ENCODE measurements at regions of chr18 and their contacts with region 1.

Region 1: DNA sequence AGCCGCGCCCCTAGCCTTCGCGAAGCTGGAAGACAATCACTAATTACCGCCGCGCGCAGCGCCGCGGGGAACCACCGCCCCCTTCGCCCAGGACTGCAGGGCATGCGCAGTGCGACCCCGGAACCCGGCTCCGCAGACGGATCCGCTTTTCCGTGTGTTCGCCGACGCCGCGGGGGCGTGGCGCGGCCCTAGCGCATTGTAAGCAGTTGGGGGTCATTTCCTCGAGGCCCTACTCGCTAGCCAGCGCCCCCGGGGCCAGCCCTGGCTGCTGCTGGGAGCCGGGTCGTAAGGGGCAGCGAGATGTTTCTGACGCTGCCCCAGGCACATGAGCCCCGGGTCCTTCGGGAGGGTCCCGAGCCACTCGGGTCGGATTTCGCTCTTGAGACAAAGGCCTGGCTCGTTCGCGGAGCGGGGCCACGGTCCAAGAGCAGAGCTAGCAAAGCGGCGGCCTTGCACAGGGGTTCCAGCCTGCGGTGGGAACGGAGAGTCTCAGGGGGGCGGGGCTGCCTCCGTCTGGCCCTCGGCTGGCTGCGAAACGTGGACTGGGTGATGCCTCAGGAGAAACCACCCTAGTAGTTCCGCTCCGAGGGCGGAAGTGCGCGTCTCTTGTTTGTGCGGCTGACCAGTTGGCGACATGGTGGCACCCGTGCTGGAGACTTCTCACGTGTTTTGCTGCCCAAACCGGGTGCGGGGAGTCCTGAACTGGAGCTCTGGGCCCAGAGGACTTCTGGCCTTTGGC is at the starts of genes ELP2 and SLC39A6:
- DNase-seq: peak; percentile 97
- ATAC-seq: peak; percentile 87
- H3K4me3 Mint-ChIP-seq: peak within 1 kb of the TSS; percentile 94
- H3K27ac Mint-ChIP-seq: peak within 1 kb of the TSS; percentile 92
- H3K4me1 Mint-ChIP-seq: peaks cover 57% of the 10 kb centered on the region
- H3K27me3 Mint-ChIP-seq: no peaks in the 10 kb centered on the region
- CTCF ChIP-seq: no peak
- total RNA-seq, gene ELP2: 105 and 124 TPM in 2 replicates
- total RNA-seq, gene SLC39A6: 17.6 and 18.6 TPM in 2 replicates

Region 2: DNA sequence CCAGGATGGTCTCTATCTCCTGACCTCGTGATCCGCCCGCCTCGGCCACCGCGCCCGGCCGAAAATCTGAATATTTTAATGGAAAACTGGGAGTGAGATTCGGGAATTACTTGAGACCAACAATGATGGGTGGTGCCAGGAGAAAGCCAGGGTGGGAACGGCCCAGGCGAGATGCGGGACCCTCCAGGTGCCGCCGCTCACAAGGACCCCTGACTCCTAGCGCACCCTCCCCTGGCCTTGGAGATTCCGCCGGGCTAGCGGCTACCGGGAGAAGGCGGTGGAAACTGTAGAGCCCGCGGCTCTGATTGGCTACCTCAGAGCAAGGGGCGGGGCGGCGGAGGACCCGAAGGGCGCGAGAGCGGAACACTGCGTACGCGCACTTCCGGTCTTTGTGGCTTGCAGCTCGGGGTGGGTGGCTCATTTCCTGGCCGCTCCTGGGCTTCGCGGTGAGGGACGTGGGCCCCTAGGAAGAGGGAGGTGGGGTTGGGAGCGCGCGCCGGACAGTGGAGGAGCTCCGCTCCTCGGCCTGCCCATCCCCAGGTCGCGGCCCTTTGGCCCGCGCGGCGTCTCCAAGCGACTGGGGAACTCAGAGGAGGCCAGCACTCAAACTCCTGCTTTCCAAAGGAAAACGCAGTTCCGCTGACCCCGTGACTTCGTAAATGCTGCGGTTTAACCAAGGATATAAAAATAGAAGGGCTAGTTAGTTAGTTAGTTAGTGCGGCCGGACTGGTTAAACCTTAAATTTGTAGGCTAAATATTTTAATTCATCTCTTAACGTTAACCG is 888.6 kb before region 1 on chr18 and contains the start of gene ZNF397:
- CTCF ChIA-PET with region 1: no interaction called
- POLR2A ChIA-PET with region 1: no interaction called
- intact Hi-C with region 1: loop called (anchors 1 kb)
- DNase-seq: peak; percentile 93
- ATAC-seq: peak; percentile 97
- H3K4me3 Mint-ChIP-seq: peak within 1 kb of the TSS; percentile 97
- H3K27ac Mint-ChIP-seq: peak within 1 kb of the TSS; percentile 98
- H3K4me1 Mint-ChIP-seq: peaks cover 22% of the 10 kb centered on the region
- H3K27me3 Mint-ChIP-seq: no peaks in the 10 kb centered on the region
- CTCF ChIP-seq: no peak
- total RNA-seq, gene ZNF397: 35.2 and 48.7 TPM in 2 replicates

Region 3: DNA sequence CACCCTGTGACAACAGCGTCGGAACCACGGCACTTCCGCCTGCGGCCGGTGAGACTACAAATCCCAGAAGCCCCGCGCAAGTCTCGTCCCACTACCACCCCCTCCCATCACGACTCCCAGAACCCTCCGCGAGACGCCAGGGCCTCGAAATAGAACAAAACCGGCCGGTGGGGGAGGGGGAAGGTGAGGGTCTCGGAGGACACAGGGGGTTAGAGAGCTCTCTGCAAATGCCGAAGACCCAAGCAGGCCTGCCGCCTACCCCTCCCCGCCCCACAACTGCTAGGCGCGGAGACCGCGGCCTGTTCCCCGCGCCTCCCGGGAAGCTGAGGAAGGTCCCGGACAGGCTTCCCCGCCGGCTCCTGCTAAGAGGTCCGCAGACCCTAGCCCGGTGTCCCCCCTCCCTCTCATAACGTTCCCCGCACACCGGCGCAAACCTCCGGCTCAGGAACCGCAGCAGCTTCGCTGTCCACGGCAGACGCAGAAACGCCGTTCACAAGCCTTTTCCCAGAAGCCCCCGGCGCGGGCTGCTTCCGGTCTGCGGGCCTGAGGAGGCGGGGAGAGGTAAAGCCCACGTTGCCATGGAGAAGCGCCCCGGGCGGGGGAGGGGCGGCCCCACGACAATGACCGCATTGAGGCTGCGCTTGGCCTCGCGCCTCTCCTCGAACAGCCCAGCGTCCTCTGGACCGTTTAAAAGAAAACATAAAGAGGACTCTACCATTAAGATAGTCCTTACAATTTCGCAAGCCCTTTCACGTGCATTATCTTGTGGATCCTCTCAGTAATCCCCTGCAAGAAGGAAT is 785.3 kb before region 1 on chr18 and contains the start of gene ZNF24:
- CTCF ChIA-PET with region 1: no interaction called
- POLR2A ChIA-PET with region 1: interaction called, 5 read pairs
- intact Hi-C with region 1: loop called (anchors 1 kb)
- DNase-seq: peak; percentile 92
- ATAC-seq: peak; percentile 83
- H3K4me3 Mint-ChIP-seq: peak within 1 kb of the TSS; percentile 98
- H3K27ac Mint-ChIP-seq: peak within 1 kb of the TSS; percentile 96
- H3K4me1 Mint-ChIP-seq: peaks cover 59% of the 10 kb centered on the region
- H3K27me3 Mint-ChIP-seq: no peaks in the 10 kb centered on the region
- CTCF ChIP-seq: no peak
- total RNA-seq, gene ZNF24: 72.5 and 75.8 TPM in 2 replicates

Region 4: GRCh38 chr18:35592298-35592697 is 537.2 kb before region 1 on chr18:
- CTCF ChIA-PET with region 1: no interaction called
- POLR2A ChIA-PET with region 1: no interaction called
- intact Hi-C with region 1: loop called (anchors 5 kb)
- DNase-seq: peak; percentile 52
- ATAC-seq: peak; percentile 96
- H3K4me3 Mint-ChIP-seq: no peak overlapping the region
- H3K27ac Mint-ChIP-seq: no peak overlapping the region
- H3K4me1 Mint-ChIP-seq: peaks cover 49% of the 10 kb centered on the region
- H3K27me3 Mint-ChIP-seq: no peaks in the 10 kb centered on the region
- CTCF ChIP-seq: no peak

Region 5: GRCh38 chr18:36067055-36067957 is 62.2 kb before region 1 on chr18 and contains the start of gene RPRD1A:
- CTCF ChIA-PET with region 1: no interaction called
- POLR2A ChIA-PET with region 1: interaction called, 14 read pairs
- intact Hi-C with region 1: loop called (anchors 1 kb)
- DNase-seq: peak; percentile 99
- ATAC-seq: peak; percentile 91
- H3K4me3 Mint-ChIP-seq: peak within 1 kb of the TSS; percentile 93
- H3K27ac Mint-ChIP-seq: peak within 1 kb of the TSS; percentile 88
- H3K4me1 Mint-ChIP-seq: peaks cover 44% of the 10 kb centered on the region
- H3K27me3 Mint-ChIP-seq: no peaks in the 10 kb centered on the region
- CTCF ChIP-seq: no peak
- total RNA-seq, gene RPRD1A: 40.7 and 47.6 TPM in 2 replicates

Region 6: DNA sequence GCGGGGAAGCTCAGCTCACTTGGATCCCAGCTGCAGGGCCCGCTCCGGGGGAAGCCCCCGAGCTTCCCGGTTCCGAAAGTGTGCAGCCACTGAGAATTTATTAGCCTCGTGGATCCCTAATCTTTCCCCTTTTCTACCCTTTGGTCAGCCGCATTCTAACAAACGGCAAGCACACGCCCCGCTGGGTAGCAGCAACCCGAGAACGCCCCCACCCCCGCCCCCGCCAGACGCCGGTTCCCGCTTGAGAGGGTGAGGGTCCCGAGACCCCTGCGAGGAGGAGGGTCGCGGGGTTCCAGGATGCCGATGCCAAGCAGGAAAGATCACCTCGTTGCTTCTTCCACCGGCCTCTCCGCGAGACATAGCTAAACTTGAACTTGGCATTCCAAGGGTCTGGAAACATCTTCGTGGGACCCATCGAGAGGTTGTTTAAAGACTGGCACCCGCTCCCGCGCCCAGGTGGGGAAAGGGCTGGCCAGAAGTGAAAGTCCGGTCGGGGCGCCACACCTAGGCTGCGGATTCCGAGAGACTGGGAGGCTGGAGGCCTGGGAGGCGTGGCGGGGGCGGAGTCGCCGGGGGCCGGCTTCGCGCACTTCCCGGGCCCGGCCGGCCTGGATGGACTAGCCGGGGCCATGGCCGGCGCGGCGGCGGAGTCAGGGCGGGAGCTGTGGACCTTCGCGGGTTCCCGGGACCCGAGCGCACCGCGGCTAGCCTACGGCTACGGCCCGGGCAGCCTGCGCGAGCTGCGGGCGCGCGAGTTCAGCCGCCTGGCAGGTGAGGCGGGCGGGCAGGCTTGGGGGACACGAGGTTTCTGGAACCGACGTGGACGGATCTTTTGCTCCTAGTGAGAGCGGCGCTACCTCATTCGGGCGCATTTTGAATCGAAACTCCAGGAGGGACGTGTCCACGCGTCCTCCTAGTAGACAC is 57.7 kb after region 1 on chr18 and contains the start of gene MOCOS:
- CTCF ChIA-PET with region 1: no interaction called
- POLR2A ChIA-PET with region 1: interaction called, 3 read pairs
- intact Hi-C with region 1: loop called (anchors 1 kb)
- DNase-seq: peak; percentile 56
- ATAC-seq: peak; percentile 60
- H3K4me3 Mint-ChIP-seq: peak within 1 kb of the TSS; percentile 84
- H3K27ac Mint-ChIP-seq: no peak within 1 kb of the TSS
- H3K4me1 Mint-ChIP-seq: peaks cover 29% of the 10 kb centered on the region
- H3K27me3 Mint-ChIP-seq: peaks cover 34% of the 10 kb centered on the region
- CTCF ChIP-seq: no peak
- total RNA-seq, gene MOCOS: 0.39 and 0.42 TPM in 2 replicates

Measured in activated B cell treated with CpG ODN at 0.5 μM for 24 hours (primary cell).